GM12878 (cell line): ENCODE measurements at regions of chr18 and their contacts with region 1.

Region 1: GRCh38 chr18:49690307-49690706 is 123.0 kb downstream of the ACAA2 start:
- DNase-seq: no peak
- ATAC-seq: peak; percentile 72
- H3K4me3 ChIP-seq: no peak overlapping the region
- H3K27ac ChIP-seq: no peak overlapping the region
- H3K4me1 ChIP-seq: no peaks in the 10 kb centered on the region
- H3K27me3 ChIP-seq: no peaks in the 10 kb centered on the region; a peak in 2 of 4 replicates
- CTCF ChIP-seq: no peak
- EP300 ChIP-seq: no peak
- POLR2A ChIP-seq: no peak
- RAD21 ChIP-seq: no peak

Region 2: DNA sequence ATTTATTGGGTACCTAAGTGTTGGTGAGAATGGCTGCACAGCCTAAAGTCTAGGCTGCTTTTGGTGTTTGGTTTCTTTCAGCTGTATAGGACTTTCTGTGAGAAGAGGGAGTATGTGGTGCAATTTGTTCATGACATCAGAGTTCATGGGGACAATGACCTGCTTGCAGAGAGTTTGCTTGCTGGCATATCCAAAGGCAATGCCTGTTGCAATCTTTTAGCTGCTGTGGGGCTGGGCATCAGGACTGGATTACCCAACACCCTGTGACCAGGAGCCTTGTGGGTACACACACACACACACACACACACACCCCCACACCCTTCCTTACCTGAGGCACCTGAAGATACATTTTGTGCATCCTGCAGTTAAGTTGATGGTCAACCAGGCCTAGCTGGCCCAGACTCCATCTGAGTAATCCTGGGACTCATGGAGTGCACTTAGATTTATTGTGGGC is 60.0 kb before region 1 on chr18:
- CTCF ChIA-PET with region 1: no interaction called
- POLR2A ChIA-PET with region 1: no interaction called
- RAD21 ChIA-PET with region 1: no interaction called
- SMC1A ChIA-PET with region 1: no interaction called
- in situ Hi-C with region 1: no loop called
- intact Hi-C with region 1: loop called (anchors 10 kb)
- DNase-seq: no peak
- ATAC-seq: no peak
- H3K4me3 ChIP-seq: no peak overlapping the region
- H3K27ac ChIP-seq: no peak overlapping the region
- H3K4me1 ChIP-seq: no peaks in the 10 kb centered on the region
- H3K27me3 ChIP-seq: peaks cover 0 to 2% of the 10 kb centered on the region in 2 experiments; a peak in 1 of 4 replicates
- CTCF ChIP-seq: no peak
- EP300 ChIP-seq: no peak
- POLR2A ChIP-seq: no peak
- RAD21 ChIP-seq: no peak

Region 3: DNA sequence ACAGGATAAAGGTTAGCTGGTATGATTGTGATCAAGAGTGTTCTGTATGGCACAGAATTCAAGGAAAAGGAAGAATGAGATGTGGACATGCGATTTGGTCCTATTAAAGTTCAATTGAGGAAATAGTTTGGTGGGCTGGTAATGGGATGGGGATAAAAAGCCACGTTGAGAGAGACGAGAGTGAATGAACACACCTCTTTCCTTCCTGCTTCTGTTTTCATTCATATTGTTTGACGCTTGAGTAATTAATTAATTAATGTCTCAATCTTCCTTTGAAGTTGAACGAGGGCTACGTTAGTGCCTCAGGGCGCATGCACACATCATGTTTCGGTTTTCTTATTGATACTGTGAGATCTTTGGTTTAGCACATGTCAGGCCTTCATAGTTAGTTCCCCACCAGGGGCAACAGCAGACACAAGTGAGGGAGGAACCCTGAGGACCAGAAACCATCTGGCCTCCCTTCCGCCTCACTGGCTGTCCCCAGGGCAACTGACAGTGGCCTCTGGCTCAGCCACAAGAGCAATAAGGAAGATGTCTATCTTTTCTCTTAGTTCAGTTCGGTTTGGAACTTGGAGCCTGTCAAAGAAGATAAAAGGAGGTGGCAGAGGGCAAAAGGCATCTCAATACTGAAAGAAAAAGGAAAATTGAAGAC is 12.4 kb before region 1 on chr18:
- CTCF ChIA-PET with region 1: no interaction called
- POLR2A ChIA-PET with region 1: no interaction called
- RAD21 ChIA-PET with region 1: no interaction called
- SMC1A ChIA-PET with region 1: no interaction called
- in situ Hi-C with region 1: no loop called
- intact Hi-C with region 1: no loop called
- DNase-seq: peak; percentile 5
- ATAC-seq: peak; percentile 97
- H3K4me3 ChIP-seq: no peak overlapping the region
- H3K27ac ChIP-seq: no peak overlapping the region
- H3K4me1 ChIP-seq: no peaks in the 10 kb centered on the region
- H3K27me3 ChIP-seq: no peaks in the 10 kb centered on the region; a peak in 1 of 4 replicates
- CTCF ChIP-seq: no peak
- EP300 ChIP-seq: no peak
- POLR2A ChIP-seq: no peak
- RAD21 ChIP-seq: no peak